Posterior vena cava (tissue), 2 donors: ENCODE measurements at regions of chr17 and their contacts with region 1.

Region 1: DNA sequence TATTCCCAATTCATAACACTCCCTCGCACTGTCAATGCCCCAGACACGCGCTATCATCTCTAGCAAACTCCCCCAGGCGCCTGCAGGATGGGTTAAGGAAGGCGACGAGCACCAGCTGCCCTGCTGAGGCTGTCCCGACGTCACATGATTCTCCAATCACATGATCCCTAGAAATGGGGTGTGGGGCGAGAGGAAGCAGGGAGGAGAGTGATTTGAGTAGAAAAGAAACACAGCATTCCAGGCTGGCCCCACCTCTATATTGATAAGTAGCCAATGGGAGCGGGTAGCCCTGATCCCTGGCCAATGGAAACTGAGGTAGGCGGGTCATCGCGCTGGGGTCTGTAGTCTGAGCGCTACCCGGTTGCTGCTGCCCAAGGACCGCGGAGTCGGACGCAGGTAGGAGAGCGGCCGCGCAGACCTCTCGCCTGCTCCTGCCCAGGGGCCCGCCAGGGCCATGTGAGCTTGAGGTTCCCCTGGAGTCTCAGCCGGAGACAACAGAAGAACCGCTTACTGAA is at the start of gene GRN:
- DNase-seq: peak; percentile 96
- total RNA-seq, gene GRN: 149 to 261 TPM

Region 2: GRCh38 chr17:44374306-44375195 is 29.6 kb after region 1 on chr17:
- intact Hi-C with region 1: loop called in 1 of 2 experiments (anchors 1 kb)
- DNase-seq: peak; percentile 78

Region 3: GRCh38 chr17:44417553-44417952 is 72.6 kb after region 1 on chr17:
- intact Hi-C with region 1: no loop called
- DNase-seq: no peak